ENCODE measurements at regions of chr13 and their contacts with region 1.

Region 1: DNA sequence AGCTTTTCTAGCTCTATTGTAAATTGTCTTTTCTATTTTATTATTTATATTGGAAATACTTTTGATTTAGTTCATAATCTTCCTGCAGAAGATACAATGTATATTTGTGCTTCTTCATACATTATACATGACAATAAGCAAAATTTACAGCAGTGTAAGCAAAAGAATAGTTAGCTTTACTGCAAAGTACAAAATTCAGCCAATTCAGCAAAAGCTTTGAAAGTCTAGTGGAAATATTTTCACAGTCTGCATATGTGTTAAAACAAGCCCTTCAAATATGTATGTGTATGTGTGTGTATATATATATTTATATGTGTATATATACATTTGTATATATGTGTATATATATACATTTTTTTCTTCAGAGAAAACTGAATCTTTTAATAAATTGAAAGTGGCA is 879.1 kb downstream of the SLITRK1 start:
- DNase-seq: no peak
- ATAC-seq: no peak
- H3K4me3 ChIP-seq: no peak overlapping the region
- H3K27ac ChIP-seq: no peak overlapping the region
- H3K4me1 ChIP-seq: no peaks in the 10 kb centered on the region
- H3K27me3 ChIP-seq: no peaks in the 10 kb centered on the region
- CTCF ChIP-seq: no peak

Region 2: DNA sequence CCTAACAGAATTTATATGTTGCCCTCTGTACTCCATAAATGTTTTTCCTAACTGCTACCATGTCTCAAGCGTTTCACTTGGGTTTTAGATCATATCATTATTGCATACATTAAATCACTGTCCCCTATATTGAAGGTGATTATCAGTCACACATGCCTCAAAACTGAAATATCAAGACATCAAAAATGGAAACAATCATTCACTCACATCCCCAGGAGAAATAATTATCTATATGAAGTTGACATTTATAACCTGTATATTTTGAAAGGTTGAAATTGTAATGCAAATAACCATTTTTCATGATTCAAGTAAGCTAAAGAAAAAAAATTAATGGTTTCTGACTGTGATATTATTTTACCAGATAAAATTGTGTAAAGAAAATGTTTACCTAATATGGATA is 816.0 kb before region 1 on chr13:
- intact Hi-C with region 1: no loop called
- DNase-seq: no peak
- ATAC-seq: no peak
- H3K4me3 ChIP-seq: no peak overlapping the region
- H3K27ac ChIP-seq: no peak overlapping the region
- H3K4me1 ChIP-seq: no peaks in the 10 kb centered on the region
- H3K27me3 ChIP-seq: no peaks in the 10 kb centered on the region
- CTCF ChIP-seq: no peak

Region 3: DNA sequence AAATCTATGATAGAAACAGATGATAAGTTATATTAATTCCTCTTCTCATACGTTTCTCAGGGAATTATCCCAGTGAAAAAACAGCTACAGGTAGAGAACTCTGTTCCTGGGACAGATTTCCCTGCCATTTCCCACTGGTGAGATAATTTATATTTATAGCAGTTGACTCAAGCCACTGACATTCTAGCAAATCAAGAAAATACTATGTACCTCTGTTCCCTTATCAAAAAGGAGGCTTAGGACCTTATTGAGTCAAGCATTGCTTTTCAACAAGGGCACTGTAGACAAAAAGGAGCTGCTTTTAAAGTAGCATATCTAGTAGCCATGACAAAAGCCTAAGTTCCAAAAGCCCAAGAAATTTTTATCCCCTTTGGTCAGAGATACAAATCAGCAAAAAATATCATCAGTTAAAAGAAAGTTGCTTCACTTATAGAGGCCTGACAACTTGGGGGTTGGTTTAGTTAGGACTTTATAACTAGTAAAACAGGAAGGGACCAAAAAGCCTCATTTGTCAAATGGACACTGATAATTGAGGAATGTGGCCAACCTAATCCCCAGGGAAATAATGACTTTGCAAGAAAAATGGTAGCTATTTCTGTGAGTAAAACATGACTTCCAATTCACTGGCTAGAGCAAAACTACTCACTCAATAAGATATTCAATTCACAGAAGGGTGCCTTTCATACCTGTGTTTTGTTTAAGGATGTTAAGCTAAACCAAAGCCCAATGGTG is 226.6 kb after region 1 on chr13:
- intact Hi-C with region 1: loop called in 1 of 10 experiments (anchors 5 kb)
- DNase-seq: no peak
- ATAC-seq: no peak
- H3K4me3 ChIP-seq: no peak overlapping the region
- H3K27ac ChIP-seq: no peak overlapping the region
- H3K4me1 ChIP-seq: no peaks in the 10 kb centered on the region
- H3K27me3 ChIP-seq: no peaks in the 10 kb centered on the region
- CTCF ChIP-seq: no peak

Region 4: DNA sequence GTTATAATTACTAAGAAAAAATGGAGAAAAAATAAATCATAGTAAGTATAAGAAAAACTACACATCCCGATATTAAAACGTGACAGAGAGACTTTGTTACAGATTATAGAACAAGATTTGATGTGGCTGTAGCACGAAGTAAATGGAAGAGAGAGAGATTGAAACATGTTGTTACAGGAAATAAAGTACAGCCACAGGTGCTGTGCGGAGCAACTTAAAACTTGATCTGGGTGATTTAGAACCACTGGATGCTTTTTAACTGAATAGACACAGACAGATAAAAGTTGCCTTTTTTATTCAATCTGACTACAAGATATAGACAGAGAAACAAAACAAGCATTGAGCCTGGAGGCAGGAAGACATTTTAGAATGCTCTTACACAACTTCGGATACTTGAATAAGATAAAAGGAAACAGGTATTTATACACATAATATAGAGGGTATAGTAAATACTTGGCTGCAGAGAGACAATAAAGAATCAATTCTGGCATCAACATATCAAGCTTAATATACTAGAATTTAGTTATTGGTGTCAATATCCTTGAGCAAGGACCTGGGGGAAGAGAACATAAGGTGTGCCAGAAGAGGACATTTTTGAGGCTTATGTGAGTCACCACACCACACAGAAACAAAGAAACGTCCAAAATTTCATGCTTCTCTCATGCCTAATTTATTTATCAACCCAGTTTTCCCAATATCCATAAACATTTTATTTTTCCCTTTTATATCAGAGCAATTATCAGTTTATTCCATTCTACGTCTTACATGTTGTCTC is 330.6 kb after region 1 on chr13:
- intact Hi-C with region 1: no loop called
- DNase-seq: no peak
- ATAC-seq: no peak
- H3K4me3 ChIP-seq: no peak overlapping the region
- H3K27ac ChIP-seq: no peak overlapping the region
- H3K4me1 ChIP-seq: no peaks in the 10 kb centered on the region
- H3K27me3 ChIP-seq: no peaks in the 10 kb centered on the region
- CTCF ChIP-seq: no peak

Measured in heart right ventricle (tissue), 16 donors.